ENCODE measurements at regions of chr11 and their contacts with region 1.

Region 1: GRCh38 chr11:2462908-2463765 is 18.3 kb downstream of the KCNQ1 start:
- DNase-seq: peak; percentile 88
- ATAC-seq: peak; percentile 82

Region 2: GRCh38 chr11:2509481-2510001 is 46.4 kb after region 1 on chr11:
- intact Hi-C with region 1: loop called (anchors 1 kb)
- DNase-seq: peak; percentile 67
- ATAC-seq: peak; percentile 77

Region 3: DNA sequence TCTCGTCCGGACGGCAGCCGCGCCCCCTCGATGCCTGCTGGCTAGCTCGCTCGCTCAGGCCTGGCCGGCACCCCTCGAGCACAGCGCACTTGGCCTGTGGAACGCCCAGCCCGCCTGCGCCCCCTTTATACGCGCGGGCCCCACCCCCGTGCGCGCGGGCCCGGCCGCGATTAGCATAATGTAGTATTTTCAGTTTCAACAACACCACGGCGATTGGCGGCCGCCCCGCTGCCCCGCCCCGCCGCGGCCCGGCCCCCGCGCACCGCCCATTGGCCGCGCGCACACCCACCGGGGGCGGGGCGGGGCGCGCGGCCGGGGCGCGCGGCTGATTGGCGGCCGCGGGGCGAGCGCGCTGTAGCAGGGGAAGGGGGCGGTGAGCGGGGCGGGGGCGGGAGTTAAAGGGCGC is 422.5 kb after region 1 on chr11 and contains the start of gene CDKN1C:
- intact Hi-C with region 1: no loop called
- DNase-seq: peak; percentile 94
- ATAC-seq: peak; percentile 83
- total RNA-seq, gene CDKN1C: 40.0 TPM

Measured in Right ventricle myocardium inferior (tissue), 1 donor.